CD4-positive, alpha-beta T cell (primary cell): ENCODE measurements at regions of chr3 and their contacts with region 1.

Region 1: DNA sequence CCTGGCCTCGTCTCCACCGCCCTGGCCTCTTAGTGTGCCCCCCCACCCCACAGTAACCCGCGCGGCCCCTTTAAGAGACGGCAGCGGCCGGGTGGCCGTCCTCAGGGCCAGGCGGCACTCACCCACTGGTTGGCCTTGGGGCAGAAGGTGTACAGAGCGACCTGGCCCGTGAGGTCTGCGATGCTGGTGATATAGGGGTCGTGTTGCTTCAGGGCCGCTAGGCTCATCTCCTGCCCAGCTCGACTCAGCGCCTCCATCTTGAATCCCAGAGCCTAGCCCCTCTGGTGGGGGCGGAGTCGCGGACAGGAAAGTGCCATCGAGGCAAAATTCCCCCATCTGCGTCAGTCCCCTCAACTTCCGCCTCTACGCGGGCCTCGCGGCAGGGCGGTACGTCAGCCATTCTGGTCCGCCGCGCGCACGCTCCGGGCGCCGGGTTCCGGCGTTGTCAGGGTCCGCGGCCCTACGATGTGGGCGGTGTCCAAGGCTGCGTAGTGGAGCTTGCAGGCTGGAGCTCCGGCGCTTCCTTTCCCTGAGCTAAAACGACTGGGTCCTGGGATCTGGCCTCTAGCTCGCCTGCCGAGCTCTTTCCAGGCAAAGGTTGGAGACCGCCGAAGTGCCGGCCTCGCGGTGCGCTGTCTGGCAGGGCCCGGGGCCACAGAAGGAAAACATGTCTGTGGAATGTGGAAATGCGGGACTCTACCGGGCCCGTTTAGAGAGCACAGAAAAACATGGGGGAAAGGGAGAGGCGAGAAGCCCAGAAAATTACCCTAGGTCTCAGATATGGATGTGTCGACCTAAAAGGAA is at the start of gene DCP1A:
- DNase-seq: peak; percentile 91 to 98 (median 94)
- ATAC-seq: peak; percentile 93
- H3K4me3 ChIP-seq: peak within 1 kb of the TSS; percentile 99
- H3K4me3 Mint-ChIP-seq: peak within 1 kb of the TSS; percentile 99
- H3K27ac ChIP-seq: peak within 1 kb of the TSS; percentile 80 to 92
- H3K27ac Mint-ChIP-seq: peak within 1 kb of the TSS; percentile 98
- H3K4me1 ChIP-seq: peaks cover 15% of the 10 kb centered on the region
- H3K4me1 Mint-ChIP-seq: peaks cover 51% of the 10 kb centered on the region
- H3K27me3 ChIP-seq: no peaks in the 10 kb centered on the region
- H3K27me3 Mint-ChIP-seq: no peaks in the 10 kb centered on the region
- CTCF ChIP-seq: no peak
- total RNA-seq, gene DCP1A: 58.9 to 60.1 TPM

Region 2: GRCh38 chr3:52705688-52706686 is 641.5 kb before region 1 on chr3 and contains the starts of genes GLT8D1 and SPCS1:
- CTCF ChIA-PET with region 1: no interaction called
- POLR2A ChIA-PET with region 1: interaction called, 3 read pairs
- intact Hi-C with region 1: loop called in 1 of 2 experiments (anchors 10 kb)
- DNase-seq: peak; percentile 70 to 94 (median 82)
- ATAC-seq: peak; percentile 89
- H3K4me3 ChIP-seq: peak within 1 kb of the TSS; percentile 98
- H3K4me3 Mint-ChIP-seq: peak within 1 kb of the TSS; percentile 96
- H3K27ac ChIP-seq: peak within 1 kb of the TSS; percentile 86 to 90
- H3K27ac Mint-ChIP-seq: peak within 1 kb of the TSS; percentile 98
- H3K4me1 ChIP-seq: peaks cover 39% of the 10 kb centered on the region
- H3K4me1 Mint-ChIP-seq: peaks cover 40% of the 10 kb centered on the region
- H3K27me3 ChIP-seq: no peaks in the 10 kb centered on the region
- H3K27me3 Mint-ChIP-seq: no peaks in the 10 kb centered on the region
- CTCF ChIP-seq: no peak
- total RNA-seq, gene GLT8D1: 8.4 to 10.8 TPM
- total RNA-seq, gene SPCS1: 60.0 to 64.5 TPM

Region 3: GRCh38 chr3:53130179-53131061 is 217.0 kb before region 1 on chr3 and contains the start of gene RFT1:
- CTCF ChIA-PET with region 1: no interaction called
- POLR2A ChIA-PET with region 1: interaction called, 3 read pairs
- intact Hi-C with region 1: loop called in 1 of 2 experiments (anchors 2 kb)
- DNase-seq: peak; percentile 94 to 100 (median 98)
- ATAC-seq: peak; percentile 92
- H3K4me3 ChIP-seq: peak within 1 kb of the TSS; percentile 80
- H3K4me3 Mint-ChIP-seq: peak within 1 kb of the TSS; percentile 92
- H3K27ac ChIP-seq: peak within 1 kb of the TSS; percentile 93 to 95
- H3K27ac Mint-ChIP-seq: peak within 1 kb of the TSS; percentile 98
- H3K4me1 ChIP-seq: peaks cover 31% of the 10 kb centered on the region
- H3K4me1 Mint-ChIP-seq: peaks cover 26% of the 10 kb centered on the region
- H3K27me3 ChIP-seq: no peaks in the 10 kb centered on the region
- H3K27me3 Mint-ChIP-seq: no peaks in the 10 kb centered on the region
- CTCF ChIP-seq: no peak
- total RNA-seq, gene RFT1: 8.5 to 10.2 TPM

Region 4: DNA sequence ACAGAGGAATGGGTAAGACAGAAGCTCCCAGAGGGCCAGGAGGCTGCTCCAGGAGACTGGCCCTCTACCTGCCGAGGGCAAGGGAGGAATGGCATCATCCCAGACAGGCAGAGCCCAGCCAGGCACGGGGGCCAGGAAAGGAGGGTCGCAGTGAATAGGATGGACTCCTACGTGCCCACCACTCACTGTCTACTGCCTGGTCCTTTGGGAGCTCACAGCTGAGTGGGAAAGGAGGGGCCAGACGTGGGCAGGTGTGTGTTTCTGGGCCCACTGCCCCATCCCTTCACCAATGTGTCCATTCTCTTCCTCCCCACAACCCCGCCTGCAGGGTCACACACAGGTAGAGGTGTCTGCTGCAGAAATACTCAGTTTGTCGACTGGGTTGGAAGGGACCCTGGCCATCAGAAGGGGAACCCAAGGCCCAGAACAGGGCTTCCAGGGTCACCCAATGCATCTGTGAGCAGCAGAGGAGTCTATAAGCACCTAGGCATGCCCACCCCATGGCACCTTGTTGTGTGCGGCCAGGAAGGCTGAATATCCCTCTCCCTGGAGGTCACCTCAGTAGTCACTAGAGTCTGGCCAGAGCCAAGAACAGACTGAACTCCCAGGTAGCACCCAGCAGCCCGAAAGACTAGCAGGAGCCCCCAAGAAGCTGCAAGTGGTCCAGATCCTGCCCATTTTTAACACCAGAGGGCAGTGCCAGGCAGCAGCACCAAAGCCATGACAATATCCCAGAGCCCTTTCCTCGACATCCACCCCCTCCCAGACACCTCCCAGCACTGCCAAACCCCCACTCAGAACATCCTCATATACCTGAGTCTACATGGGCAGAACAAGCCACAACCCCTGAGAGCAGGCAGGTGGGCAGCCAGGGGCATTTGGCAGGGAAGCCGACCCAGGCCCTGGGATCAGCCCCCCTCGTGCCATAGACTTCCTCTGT is 115.6 kb before region 1 on chr3:
- CTCF ChIA-PET with region 1: no interaction called
- POLR2A ChIA-PET with region 1: no interaction called
- intact Hi-C with region 1: no loop called
- DNase-seq: no peak
- ATAC-seq: no peak
- H3K4me3 ChIP-seq: no peak overlapping the region
- H3K4me3 Mint-ChIP-seq: no peak overlapping the region
- H3K27ac ChIP-seq: no peak overlapping the region
- H3K27ac Mint-ChIP-seq: no peak overlapping the region
- H3K4me1 ChIP-seq: no peaks in the 10 kb centered on the region
- H3K4me1 Mint-ChIP-seq: no peaks in the 10 kb centered on the region
- H3K27me3 ChIP-seq: no peaks in the 10 kb centered on the region
- H3K27me3 Mint-ChIP-seq: no peaks in the 10 kb centered on the region
- CTCF ChIP-seq: no peak

Region 5: GRCh38 chr3:53255775-53256703 is 91.4 kb before region 1 on chr3 and contains the start of gene TKT:
- CTCF ChIA-PET with region 1: no interaction called
- POLR2A ChIA-PET with region 1: interaction called, 18 read pairs
- intact Hi-C with region 1: loop called in 1 of 2 experiments (anchors 1 kb)
- DNase-seq: peak; percentile 62 to 93 (median 76)
- ATAC-seq: peak; percentile 82
- H3K4me3 ChIP-seq: peak within 1 kb of the TSS; percentile 70
- H3K4me3 Mint-ChIP-seq: peak within 1 kb of the TSS; percentile 92
- H3K27ac ChIP-seq: peak within 1 kb of the TSS in 1 of 2 donors; percentile 13
- H3K27ac Mint-ChIP-seq: peak within 1 kb of the TSS; percentile 80
- H3K4me1 ChIP-seq: peaks cover 44% of the 10 kb centered on the region
- H3K4me1 Mint-ChIP-seq: peaks cover 39% of the 10 kb centered on the region
- H3K27me3 ChIP-seq: no peaks in the 10 kb centered on the region
- H3K27me3 Mint-ChIP-seq: no peaks in the 10 kb centered on the region
- CTCF ChIP-seq: no peak
- total RNA-seq, gene TKT: 91.5 to 103 TPM

Region 6: DNA sequence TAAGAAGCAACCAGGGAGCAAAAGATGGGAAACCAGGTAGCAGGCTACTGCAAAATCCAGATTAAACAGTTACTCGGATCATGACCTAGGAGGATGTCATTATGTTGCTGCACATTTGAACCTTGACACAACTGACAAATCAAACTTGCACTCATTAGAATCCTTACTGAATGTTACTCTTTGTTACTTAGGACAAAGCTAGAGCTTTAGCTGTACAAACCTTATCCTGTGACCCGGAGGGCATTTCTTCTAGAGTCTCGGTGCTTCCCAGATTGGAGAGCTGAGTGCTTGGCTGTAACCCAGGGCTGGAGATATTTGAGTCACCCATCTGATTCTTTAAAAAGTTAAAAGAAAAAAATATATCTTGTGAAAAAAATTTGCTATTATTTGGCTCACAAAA is 43.5 kb before region 1 on chr3:
- CTCF ChIA-PET with region 1: no interaction called
- POLR2A ChIA-PET with region 1: no interaction called
- intact Hi-C with region 1: loop called (anchors 2 kb)
- DNase-seq: no peak
- ATAC-seq: no peak
- H3K4me3 ChIP-seq: no peak overlapping the region
- H3K4me3 Mint-ChIP-seq: no peak overlapping the region
- H3K27ac ChIP-seq: no peak overlapping the region
- H3K27ac Mint-ChIP-seq: no peak overlapping the region
- H3K4me1 ChIP-seq: no peaks in the 10 kb centered on the region
- H3K4me1 Mint-ChIP-seq: peaks cover 6% of the 10 kb centered on the region
- H3K27me3 ChIP-seq: no peaks in the 10 kb centered on the region
- H3K27me3 Mint-ChIP-seq: no peaks in the 10 kb centered on the region
- CTCF ChIP-seq: no peak

Region 7: DNA sequence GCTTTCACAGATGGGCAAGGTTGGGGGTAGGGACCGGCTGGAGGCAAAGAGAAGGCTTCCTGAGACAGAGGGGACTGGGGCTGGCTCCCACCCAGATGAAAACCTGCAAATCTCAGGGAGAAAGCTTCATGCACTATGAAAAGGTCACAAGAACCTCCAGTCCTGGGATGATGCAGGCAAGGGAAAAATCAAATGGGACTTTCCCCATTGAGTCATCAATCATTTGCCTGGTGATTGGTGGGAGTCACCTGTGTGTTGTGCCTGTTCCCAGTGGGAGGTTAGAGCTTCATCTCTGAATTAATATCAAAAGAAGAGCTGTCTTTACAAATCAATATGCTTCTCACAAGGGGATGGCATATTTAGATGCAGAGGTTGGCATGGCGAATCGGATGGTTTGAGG is 196.9 kb after region 1 on chr3:
- CTCF ChIA-PET with region 1: no interaction called
- POLR2A ChIA-PET with region 1: no interaction called
- intact Hi-C with region 1: no loop called
- DNase-seq: no peak
- ATAC-seq: no peak
- H3K4me3 ChIP-seq: no peak overlapping the region
- H3K4me3 Mint-ChIP-seq: no peak overlapping the region
- H3K27ac ChIP-seq: no peak overlapping the region
- H3K27ac Mint-ChIP-seq: no peak overlapping the region
- H3K4me1 ChIP-seq: no peaks in the 10 kb centered on the region
- H3K4me1 Mint-ChIP-seq: no peaks in the 10 kb centered on the region
- H3K27me3 ChIP-seq: peaks cover 7 to 10% of the 10 kb centered on the region in 2 experiments
- H3K27me3 Mint-ChIP-seq: peaks cover 40% of the 10 kb centered on the region
- CTCF ChIP-seq: no peak